Heart left ventricle (tissue), 16 donors: ENCODE measurements at regions of chr1 and their contacts with region 1.

Region 1: GRCh38 chr1:16498573-16499413 is 15.3 kb downstream of the RNU1-1 start:
- DNase-seq: peak; percentile 90 to 95 (median 93)
- ATAC-seq: peak; percentile 66 to 96 (median 94)
- H3K4me3 ChIP-seq: peak overlapping the region; percentile 69 to 94 (median 88)
- H3K27ac ChIP-seq: peak overlapping the region; percentile 51 to 90 (median 85)
- H3K4me1 ChIP-seq: peaks cover 0 to 23% (median 7%) of the 10 kb centered on the region in 12 donors
- H3K27me3 ChIP-seq: no peaks in the 10 kb centered on the region
- CTCF ChIP-seq: peak in 5 of 12 donors; percentile 22 to 44 (median 42)
- POLR2A ChIP-seq: peak in 1 of 2 donors; percentile 70

Region 2: DNA sequence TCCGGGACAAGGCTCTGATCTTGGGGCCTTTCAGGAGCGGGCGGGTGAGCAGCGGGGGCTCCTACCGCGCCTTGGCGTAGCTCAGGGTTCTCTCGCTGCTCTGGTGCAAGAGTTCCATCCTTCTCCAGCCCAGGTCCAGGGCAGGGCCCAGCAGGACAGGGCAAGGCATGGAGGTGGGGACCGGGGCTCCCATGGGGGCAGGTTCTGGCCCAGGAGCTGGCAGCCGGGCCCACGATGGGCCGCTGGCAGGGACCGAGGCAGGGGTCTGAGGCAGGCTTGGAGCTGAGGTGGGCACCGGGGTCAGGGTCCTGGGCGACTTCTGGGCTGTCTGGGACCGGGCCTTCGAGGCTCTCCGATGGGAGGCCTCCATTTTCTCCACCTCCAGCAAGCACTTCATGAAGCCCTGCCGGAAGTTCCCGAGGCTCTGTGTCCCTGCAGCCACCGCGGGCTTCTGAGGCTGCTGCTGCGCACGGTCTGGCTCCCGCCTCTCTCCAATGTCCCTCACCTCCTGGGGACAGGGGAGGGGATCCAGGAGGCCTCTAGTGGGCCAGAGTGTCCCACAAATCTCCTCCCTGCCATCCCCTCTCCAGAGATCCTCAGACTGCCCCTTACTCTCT is 89.1 kb before region 1 on chr1:
- intact Hi-C with region 1: no loop called
- DNase-seq: peak in 1 of 5 donors; percentile 28
- ATAC-seq: peak in 2 of 4 donors; percentile 11 to 14
- H3K4me3 ChIP-seq: no peak overlapping the region
- H3K27ac ChIP-seq: no peak overlapping the region
- H3K4me1 ChIP-seq: no peaks in the 10 kb centered on the region
- H3K27me3 ChIP-seq: no peaks in the 10 kb centered on the region
- CTCF ChIP-seq: no peak
- POLR2A ChIP-seq: no peak

Region 3: GRCh38 chr1:16440470-16441281 is 58.1 kb before region 1 on chr1 and contains the start of gene NECAP2:
- intact Hi-C with region 1: loop called in 5 of 10 experiments (anchors 1 to 10 kb)
- DNase-seq: peak; percentile 93 to 97 (median 95)
- ATAC-seq: peak; percentile 89 to 97 (median 96)
- H3K4me3 ChIP-seq: peak within 1 kb of the TSS; percentile 59 to 99 (median 98)
- H3K27ac ChIP-seq: peak within 1 kb of the TSS; percentile 58 to 98 (median 86)
- H3K4me1 ChIP-seq: peaks cover 0 to 54% (median 29%) of the 10 kb centered on the region in 12 donors
- H3K27me3 ChIP-seq: no peaks in the 10 kb centered on the region
- CTCF ChIP-seq: peak; percentile 81 to 98 (median 92)
- POLR2A ChIP-seq: peak in 1 of 2 donors; percentile 59
- total RNA-seq, gene NECAP2: 10.7 to 53.0 (median 12.1) TPM

Region 4: DNA sequence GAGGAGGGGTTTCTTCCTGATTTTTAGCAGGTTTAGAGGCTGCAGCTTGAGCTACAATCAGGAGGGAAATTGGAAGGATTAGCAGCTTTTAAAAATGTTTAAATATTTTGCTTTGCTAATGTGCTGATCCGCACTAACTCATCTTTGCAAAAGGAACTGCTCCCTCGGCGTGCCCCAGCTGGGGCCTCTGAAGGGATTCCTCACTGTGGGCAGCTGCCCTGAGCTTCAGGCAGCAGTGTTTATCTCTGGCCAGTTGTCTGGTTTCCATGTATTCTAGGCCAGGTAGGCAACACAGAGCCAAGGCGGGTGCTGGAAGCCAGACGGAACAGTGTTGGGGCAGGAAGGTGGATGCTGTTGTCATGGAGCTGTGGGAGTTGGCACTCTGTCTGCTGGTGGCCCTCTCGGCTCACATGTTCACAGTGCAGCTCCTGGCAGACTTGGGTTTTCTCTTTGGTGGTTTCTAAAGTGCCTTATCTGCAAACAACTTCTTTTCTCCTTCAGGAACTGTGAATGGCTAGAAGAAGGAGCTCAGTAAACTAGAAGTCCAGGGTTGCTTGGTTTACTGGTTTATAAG is 39.4 kb before region 1 on chr1:
- intact Hi-C with region 1: loop called in 1 of 10 experiments (anchors 5 kb)
- DNase-seq: no peak
- ATAC-seq: peak; percentile 50 to 66 (median 62)
- H3K4me3 ChIP-seq: no peak overlapping the region
- H3K27ac ChIP-seq: no peak overlapping the region
- H3K4me1 ChIP-seq: peaks cover 0 to 24% (median 7%) of the 10 kb centered on the region in 12 donors
- H3K27me3 ChIP-seq: no peaks in the 10 kb centered on the region
- CTCF ChIP-seq: no peak
- POLR2A ChIP-seq: no peak